Dendritic cell treated with granulocyte-macrophage colony-stimulating factor and Interleukin-4, amounts not matched to agents 40 ng/mL and 50 ng/mL, for 4 days (primary cell): ENCODE measurements at regions of chr9 and their contacts with region 1.

Region 1: DNA sequence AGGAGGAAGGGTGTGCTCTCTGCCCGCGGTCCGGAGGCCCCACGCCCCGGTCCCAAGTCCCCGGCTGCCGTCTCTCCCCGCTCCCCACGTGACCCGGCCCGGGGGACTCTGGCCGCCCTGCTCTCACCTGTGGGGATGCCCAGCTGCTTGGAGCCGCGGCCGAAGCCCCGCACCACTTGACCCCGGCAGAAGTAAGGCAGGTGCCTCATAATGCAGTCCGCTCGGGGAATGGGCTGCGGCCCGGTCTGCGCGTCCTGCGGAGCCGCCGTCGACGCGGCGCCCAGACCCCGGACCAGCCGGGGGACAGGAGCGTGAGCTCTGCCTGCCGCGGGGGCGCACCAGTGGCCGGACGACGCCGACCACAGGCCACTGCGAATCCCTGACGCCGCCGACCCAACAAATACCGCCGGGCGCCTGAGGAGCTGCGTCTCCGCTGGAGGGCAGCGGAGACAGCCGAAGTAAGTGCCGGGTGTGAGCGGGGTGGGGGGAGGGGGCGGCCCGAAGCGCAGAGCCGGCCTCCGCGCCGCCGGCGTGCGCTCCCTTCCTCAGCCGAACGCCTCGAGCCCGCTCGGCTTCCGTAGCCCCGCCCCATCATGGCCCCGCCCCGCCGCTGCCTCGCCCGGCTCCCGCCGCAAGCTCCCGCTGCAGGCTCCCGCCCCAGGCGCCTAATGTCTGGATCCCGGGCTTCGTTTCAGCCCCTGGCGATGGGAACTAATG is at the start of gene RFK:
- H3K4me3 Mint-ChIP-seq: peak within 1 kb of the TSS; percentile 94
- H3K27ac Mint-ChIP-seq: peak within 1 kb of the TSS; percentile 99
- H3K4me1 Mint-ChIP-seq: peaks cover 29% of the 10 kb centered on the region
- H3K27me3 Mint-ChIP-seq: no peaks in the 10 kb centered on the region

Region 2: GRCh38 chr9:76358593-76359280 is 35.4 kb before region 1 on chr9:
- intact Hi-C with region 1: loop called (anchors 5 kb)
- H3K4me3 Mint-ChIP-seq: no peak overlapping the region
- H3K27ac Mint-ChIP-seq: peak overlapping the region; percentile 93
- H3K4me1 Mint-ChIP-seq: peaks cover 40% of the 10 kb centered on the region
- H3K27me3 Mint-ChIP-seq: no peaks in the 10 kb centered on the region

Region 3: DNA sequence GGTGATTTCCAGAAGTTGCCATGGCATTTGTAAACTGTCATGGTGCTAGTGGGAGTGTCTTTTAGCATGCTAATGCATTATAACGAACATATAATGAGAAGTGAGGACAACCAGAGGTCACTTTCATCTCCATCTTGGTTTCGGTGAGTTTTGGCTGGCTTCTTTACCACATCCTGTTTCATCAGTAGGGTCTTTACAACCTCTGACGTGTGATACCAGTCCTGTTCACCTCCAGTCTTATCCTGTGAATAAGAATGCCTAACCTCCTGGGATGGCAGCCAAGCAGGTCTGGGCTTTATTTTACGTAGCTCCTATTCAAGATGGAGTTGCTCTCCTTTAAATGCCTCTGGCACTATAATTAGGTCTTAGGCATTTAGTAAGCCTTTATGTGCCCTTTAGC is 20.5 kb after region 1 on chr9:
- intact Hi-C with region 1: no loop called
- H3K4me3 Mint-ChIP-seq: no peak overlapping the region
- H3K27ac Mint-ChIP-seq: no peak overlapping the region
- H3K4me1 Mint-ChIP-seq: peaks cover 8% of the 10 kb centered on the region
- H3K27me3 Mint-ChIP-seq: no peaks in the 10 kb centered on the region